Activated naive CD4-positive, alpha-beta T cell treated with anti-CD3 and anti-CD28 coated beads for 36 hours (primary cell): ENCODE measurements at regions of chr6 and their contacts with region 1.

Region 1: GRCh38 chr6:45714741-45715507 is 300.7 kb downstream of the CLIC5 start:
- DNase-seq: peak; percentile 73
- H3K4me3 Mint-ChIP-seq: no peak overlapping the region
- H3K27ac Mint-ChIP-seq: no peak overlapping the region
- H3K4me1 Mint-ChIP-seq: peaks cover 35% of the 10 kb centered on the region
- H3K27me3 Mint-ChIP-seq: no peaks in the 10 kb centered on the region

Region 2: GRCh38 chr6:44475779-44476434 is 1239.0 kb before region 1 on chr6:
- CTCF ChIA-PET with region 1: interaction called, 3 read pairs
- intact Hi-C with region 1: loop called (anchors 1 kb)
- DNase-seq: peak; percentile 81
- H3K4me3 Mint-ChIP-seq: no peak overlapping the region
- H3K27ac Mint-ChIP-seq: no peak overlapping the region
- H3K4me1 Mint-ChIP-seq: no peaks in the 10 kb centered on the region
- H3K27me3 Mint-ChIP-seq: no peaks in the 10 kb centered on the region

Region 3: DNA sequence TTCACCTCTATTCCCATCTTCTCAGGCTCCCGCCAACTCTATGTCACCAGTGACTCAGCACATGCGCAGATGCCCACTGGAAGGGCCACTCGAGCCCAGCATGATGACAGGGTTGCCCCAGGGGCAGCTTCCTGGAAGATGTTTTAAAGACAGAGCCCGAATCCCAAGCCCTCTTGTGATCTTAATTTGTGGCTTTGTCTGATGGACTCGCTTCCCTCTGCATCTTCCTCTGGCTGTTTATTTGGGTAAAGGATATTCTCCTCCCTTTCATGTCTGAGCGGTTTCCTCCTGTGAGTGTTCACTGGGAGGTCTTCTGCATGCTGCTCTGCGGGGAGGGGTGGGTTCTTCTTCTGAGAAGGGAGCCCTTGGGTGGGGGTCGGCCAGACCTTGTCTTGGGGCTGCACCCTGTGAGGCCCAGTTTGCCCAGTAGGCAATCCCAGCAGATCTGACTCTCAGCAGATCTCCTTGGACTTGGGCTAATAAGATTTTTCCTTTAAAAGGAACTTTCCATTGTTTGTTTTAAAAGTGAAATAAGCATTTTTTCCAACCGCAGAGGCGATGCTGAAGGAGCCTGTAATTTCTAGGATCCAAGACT is 926.4 kb before region 1 on chr6:
- CTCF ChIA-PET with region 1: no interaction called
- intact Hi-C with region 1: loop called (anchors 5 kb)
- DNase-seq: no peak
- H3K4me3 Mint-ChIP-seq: no peak overlapping the region
- H3K27ac Mint-ChIP-seq: no peak overlapping the region
- H3K4me1 Mint-ChIP-seq: peaks cover 13% of the 10 kb centered on the region
- H3K27me3 Mint-ChIP-seq: no peaks in the 10 kb centered on the region

Region 4: GRCh38 chr6:45163952-45164766 is 550.8 kb before region 1 on chr6:
- CTCF ChIA-PET with region 1: interaction called, 3 read pairs
- intact Hi-C with region 1: loop called (anchors 1 kb)
- DNase-seq: peak; percentile 72
- H3K4me3 Mint-ChIP-seq: peak overlapping the region; percentile 17
- H3K27ac Mint-ChIP-seq: peak overlapping the region; percentile 93
- H3K4me1 Mint-ChIP-seq: peaks cover 63% of the 10 kb centered on the region
- H3K27me3 Mint-ChIP-seq: no peaks in the 10 kb centered on the region

Region 5: DNA sequence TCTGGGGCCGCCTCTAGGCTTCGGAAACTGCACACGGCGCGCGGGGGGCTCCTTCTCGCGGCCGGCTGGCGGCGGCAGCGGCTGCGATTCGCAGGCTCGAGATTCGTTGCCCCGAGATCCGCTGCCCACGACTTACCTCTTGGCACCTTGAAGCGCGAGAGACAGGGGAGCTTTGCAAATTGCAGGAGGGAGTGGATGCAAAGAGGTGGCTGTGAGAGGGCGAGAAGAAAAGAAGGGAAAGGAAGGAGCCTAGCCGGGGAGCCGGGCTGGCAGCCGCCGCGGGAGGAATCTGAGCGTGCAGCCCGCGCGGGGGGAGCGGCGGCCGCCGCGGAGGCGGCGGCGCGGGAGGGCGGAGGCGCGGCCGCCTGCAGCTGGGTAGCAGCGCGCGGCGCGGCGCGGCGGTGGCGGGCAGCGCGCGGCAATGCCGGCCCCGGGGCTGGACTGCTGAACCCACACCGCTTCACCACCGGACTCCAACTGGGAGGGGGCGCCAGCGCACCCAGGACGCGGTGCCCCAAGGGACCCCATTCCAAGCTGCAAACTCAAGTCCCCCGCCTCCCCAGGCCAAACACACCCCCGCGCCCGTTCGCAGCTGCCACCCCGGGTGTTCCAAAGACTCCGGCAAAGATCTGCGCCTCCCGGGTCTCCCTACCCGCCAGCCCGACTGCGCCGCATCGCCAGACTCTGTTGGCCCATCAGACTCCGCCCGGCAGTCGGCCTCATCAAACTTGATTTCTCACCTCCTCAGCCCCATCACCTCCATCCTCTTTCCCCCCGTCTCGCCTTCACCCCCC is 293.0 kb before region 1 on chr6:
- CTCF ChIA-PET with region 1: interaction called, 19 read pairs
- intact Hi-C with region 1: loop called (anchors 1 kb)
- DNase-seq: peak; percentile 62
- H3K4me3 Mint-ChIP-seq: peak overlapping the region; percentile 93
- H3K27ac Mint-ChIP-seq: peak overlapping the region; percentile 88
- H3K4me1 Mint-ChIP-seq: peaks cover 29% of the 10 kb centered on the region
- H3K27me3 Mint-ChIP-seq: peaks cover 13% of the 10 kb centered on the region

Region 6: GRCh38 chr6:45590225-45590624 is 124.7 kb before region 1 on chr6:
- CTCF ChIA-PET with region 1: no interaction called
- intact Hi-C with region 1: loop called (anchors 2 kb)
- DNase-seq: no peak
- H3K4me3 Mint-ChIP-seq: no peak overlapping the region
- H3K27ac Mint-ChIP-seq: no peak overlapping the region
- H3K4me1 Mint-ChIP-seq: peaks cover 77% of the 10 kb centered on the region
- H3K27me3 Mint-ChIP-seq: no peaks in the 10 kb centered on the region

Region 7: DNA sequence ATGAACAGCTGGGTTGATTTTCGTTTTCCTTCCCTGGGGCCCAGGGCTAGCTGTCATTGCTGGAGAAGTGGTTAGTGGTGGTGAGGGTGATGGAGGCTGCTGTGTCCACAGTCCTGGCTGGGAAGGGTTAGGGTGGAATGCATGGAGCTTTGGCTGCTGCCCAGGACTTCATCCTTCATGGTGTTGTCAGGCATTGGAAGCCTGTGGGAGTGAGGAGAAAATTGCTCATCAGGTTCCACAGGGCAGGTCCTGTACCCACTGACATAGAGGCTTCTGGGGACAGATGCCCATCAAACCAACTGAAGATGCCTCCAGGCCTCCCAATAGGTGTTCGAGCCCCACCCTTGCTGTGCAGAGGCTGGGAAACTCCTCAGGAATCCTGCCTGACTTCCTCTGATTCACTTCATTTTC is 74.8 kb before region 1 on chr6:
- CTCF ChIA-PET with region 1: no interaction called
- intact Hi-C with region 1: no loop called
- DNase-seq: no peak
- H3K4me3 Mint-ChIP-seq: no peak overlapping the region
- H3K27ac Mint-ChIP-seq: no peak overlapping the region
- H3K4me1 Mint-ChIP-seq: peaks cover 7% of the 10 kb centered on the region
- H3K27me3 Mint-ChIP-seq: no peaks in the 10 kb centered on the region

Region 8: GRCh38 chr6:45896783-45897441 is 182.0 kb after region 1 on chr6:
- CTCF ChIA-PET with region 1: no interaction called
- intact Hi-C with region 1: no loop called
- DNase-seq: no peak
- H3K4me3 Mint-ChIP-seq: no peak overlapping the region
- H3K27ac Mint-ChIP-seq: no peak overlapping the region
- H3K4me1 Mint-ChIP-seq: no peaks in the 10 kb centered on the region
- H3K27me3 Mint-ChIP-seq: no peaks in the 10 kb centered on the region

Region 9: DNA sequence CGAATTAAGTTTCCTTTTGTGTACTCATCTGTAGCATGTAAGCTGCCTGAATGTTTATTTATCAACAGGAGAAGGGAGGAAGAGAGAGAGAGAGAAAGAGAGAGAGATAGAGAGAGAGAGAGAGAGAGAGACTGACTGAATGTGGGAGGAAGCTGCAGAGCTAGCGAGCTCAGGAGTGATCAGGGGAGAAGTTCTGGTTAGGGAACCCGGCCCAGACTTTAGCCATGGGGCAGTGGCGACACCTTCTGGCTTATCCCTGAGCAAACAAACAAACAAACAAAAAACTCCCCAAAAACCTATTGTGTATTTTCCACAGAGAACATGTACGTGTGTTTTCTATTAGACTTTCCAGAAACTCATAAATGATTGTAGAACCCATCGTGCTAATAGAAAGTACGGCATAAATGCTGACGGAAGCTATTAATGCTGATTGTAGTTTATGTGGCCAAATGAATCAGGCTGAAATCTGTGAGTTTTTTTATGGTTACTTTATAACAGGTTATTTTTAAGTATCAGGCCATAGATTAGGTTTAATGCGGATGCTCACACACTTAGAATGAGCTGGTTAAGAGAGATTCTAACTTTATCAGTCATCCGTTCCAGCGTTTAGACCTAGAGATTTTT is 207.9 kb after region 1 on chr6:
- CTCF ChIA-PET with region 1: interaction called, 15 read pairs
- intact Hi-C with region 1: loop called (anchors 1 kb)
- DNase-seq: peak; percentile 83
- H3K4me3 Mint-ChIP-seq: no peak overlapping the region
- H3K27ac Mint-ChIP-seq: peak overlapping the region; percentile 71
- H3K4me1 Mint-ChIP-seq: peaks cover 34% of the 10 kb centered on the region
- H3K27me3 Mint-ChIP-seq: peaks cover 12% of the 10 kb centered on the region